Transverse colon (tissue), 4 donors: ENCODE measurements at regions of chr6 and their contacts with region 1.

Region 1: GRCh38 chr6:2848851-2849250 is 7.2 kb upstream of the SERPINB1 start:
- DNase-seq: peak; percentile 58
- H3K4me3 ChIP-seq: no peak overlapping the region
- H3K27ac ChIP-seq: no peak overlapping the region
- H3K4me1 ChIP-seq: peaks cover 3 to 18% (median 11%) of the 10 kb centered on the region in 4 donors
- H3K27me3 ChIP-seq: no peaks in the 10 kb centered on the region
- CTCF ChIP-seq: no peak
- EP300 ChIP-seq: no peak
- POLR2A ChIP-seq: no peak

Region 2: GRCh38 chr6:2432239-2432638 is 416.6 kb before region 1 on chr6:
- in situ Hi-C with region 1: no loop called
- intact Hi-C with region 1: no loop called
- DNase-seq: no peak
- H3K4me3 ChIP-seq: no peak overlapping the region
- H3K27ac ChIP-seq: no peak overlapping the region
- H3K4me1 ChIP-seq: no peaks in the 10 kb centered on the region
- H3K27me3 ChIP-seq: no peaks in the 10 kb centered on the region
- CTCF ChIP-seq: no peak
- EP300 ChIP-seq: no peak
- POLR2A ChIP-seq: no peak

Region 3: GRCh38 chr6:2911171-2911570 is 62.3 kb after region 1 on chr6:
- in situ Hi-C with region 1: loop called in 2 of 4 experiments (anchors 5 to 10 kb)
- intact Hi-C with region 1: no loop called
- DNase-seq: no peak
- H3K4me3 ChIP-seq: no peak overlapping the region
- H3K27ac ChIP-seq: no peak overlapping the region
- H3K4me1 ChIP-seq: peaks cover 0 to 6% (median 1%) of the 10 kb centered on the region in 4 donors
- H3K27me3 ChIP-seq: no peaks in the 10 kb centered on the region
- CTCF ChIP-seq: no peak
- EP300 ChIP-seq: no peak
- POLR2A ChIP-seq: no peak